Activated T-helper 1 cell treated with anti-CD3 and anti-CD28 coated beads, Interleukin-12 subunit alpha, Interleukin-12 subunit beta, Interleukin-2, Interleukin-4 antibody, amounts not matched to agents 30 ng/mL and 10 ng/mL and 1 ng/mL, durations not matched to agents 14 hours and 24 hours and 36 hours (primary cell): ENCODE measurements at regions of chr14 and their contacts with region 1.

Region 1: DNA sequence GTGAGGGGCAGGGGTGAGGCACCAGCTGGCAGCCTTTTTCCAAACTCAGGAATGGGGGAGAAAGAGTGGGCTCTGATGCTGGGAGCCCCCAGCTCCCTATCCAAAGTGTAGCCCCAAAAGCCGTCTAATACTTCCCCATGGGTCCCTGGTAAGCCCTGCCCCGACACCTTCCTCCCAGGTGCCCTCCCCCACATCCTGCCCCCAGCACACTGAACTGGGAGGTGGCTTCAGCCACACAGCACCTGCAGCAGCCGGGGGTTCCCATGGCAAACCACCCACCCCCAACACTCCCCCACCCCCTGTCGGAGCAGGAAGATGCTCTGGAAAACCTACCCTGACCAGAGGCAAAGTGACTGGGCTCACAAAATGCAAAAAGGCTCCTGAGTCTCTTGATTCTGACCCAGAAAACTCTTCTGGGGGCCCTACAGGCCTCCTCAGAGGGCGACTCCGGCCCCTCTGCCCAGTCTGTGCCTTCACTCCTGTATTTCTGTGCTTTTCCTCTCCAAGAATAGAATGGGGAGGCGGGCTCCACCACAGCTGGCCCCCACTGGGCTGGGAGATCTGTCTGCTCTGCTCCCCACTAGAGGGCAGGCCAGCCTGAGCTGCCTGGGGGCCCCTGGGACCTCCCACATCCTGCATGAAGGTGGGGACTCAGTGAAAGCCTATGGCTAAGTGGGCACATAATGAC is 81.6 kb downstream of the ITPK1 start:
- DNase-seq: peak; percentile 12
- H3K4me3 Mint-ChIP-seq: no peak overlapping the region
- H3K27ac Mint-ChIP-seq: peak overlapping the region; percentile 58
- H3K4me1 Mint-ChIP-seq: peaks cover 16% of the 10 kb centered on the region
- H3K27me3 Mint-ChIP-seq: no peaks in the 10 kb centered on the region

Region 2: DNA sequence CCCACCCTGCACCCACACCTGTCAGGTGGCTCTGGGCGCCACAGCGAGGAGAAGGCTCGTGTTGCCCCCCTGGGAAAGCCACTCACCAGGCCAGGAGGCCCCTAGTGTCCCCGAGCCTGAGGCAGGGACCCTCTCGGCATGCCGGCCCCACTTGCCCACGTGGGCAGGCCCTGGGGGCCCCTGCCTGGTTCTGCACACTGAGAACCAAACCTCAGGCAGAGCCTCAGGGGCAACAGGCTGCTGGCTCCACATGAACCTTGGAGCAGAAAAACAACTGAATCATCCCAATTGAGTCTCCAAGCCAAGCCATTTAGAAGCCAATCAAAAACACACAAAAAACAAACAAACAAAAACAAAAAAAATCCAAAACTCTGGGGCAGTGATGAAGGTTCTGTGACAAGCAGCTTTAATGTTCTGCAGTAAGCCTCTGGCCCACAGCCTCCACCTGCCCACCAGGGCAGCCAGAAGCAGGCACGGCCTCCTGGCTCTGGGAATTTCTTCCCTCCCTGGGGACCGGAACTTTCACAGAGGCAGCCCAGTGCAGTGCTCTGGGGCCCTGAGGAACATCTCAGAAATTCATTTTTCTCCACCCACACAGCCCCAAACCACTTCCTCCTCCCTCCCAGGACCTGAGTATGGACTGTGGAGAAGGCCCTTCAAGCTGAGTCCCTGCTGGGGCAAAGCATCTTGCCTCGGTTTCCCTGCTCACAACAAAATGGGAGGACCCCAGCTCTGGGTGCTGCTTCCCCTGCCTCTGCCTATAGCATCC is 21.0 kb before region 1 on chr14:
- intact Hi-C with region 1: no loop called
- DNase-seq: no peak
- H3K4me3 Mint-ChIP-seq: no peak overlapping the region
- H3K27ac Mint-ChIP-seq: no peak overlapping the region
- H3K4me1 Mint-ChIP-seq: peaks cover 12% of the 10 kb centered on the region
- H3K27me3 Mint-ChIP-seq: no peaks in the 10 kb centered on the region

Region 3: DNA sequence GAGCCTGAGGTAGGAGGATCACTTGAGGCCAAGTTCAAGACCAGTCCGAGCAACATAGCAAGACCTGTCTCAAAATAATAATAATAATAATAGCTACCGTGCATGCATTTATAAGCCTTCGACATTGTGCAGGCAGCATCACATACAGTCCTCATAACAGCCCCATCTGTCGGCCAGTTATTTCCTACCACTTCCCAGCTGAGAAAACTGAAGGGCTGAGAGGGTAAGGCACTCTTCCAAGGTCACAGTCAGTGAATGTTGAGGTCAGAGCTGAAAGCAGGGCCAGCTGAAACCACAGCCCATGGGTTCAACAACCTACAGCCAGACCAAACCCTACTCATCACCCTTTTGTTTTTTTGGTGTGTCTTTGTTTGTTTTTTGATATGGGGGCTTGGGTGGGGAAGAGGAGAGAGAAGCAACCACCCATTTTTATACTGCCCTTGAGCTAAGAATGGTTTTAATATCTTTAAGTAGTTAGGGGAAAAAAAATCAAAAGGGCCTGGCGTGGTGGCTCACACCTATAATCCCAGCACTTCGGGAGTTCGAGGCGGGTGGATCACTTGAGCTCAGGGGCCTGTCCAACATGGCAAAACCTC is 98.4 kb after region 1 on chr14:
- intact Hi-C with region 1: loop called (anchors 5 kb)
- DNase-seq: no peak
- H3K4me3 Mint-ChIP-seq: no peak overlapping the region
- H3K27ac Mint-ChIP-seq: no peak overlapping the region
- H3K4me1 Mint-ChIP-seq: no peaks in the 10 kb centered on the region
- H3K27me3 Mint-ChIP-seq: peaks cover 10% of the 10 kb centered on the region